Panc1 (cell line): ENCODE measurements at regions of chr19 and their contacts with region 1.

Region 1: GRCh38 chr19:40139533-40140287 is 49.0 kb upstream of the ZNF780A start:
- DNase-seq: peak; percentile 100
- ATAC-seq: peak; percentile 76
- H3K4me3 ChIP-seq: no peak overlapping the region
- H3K27ac ChIP-seq: no peak overlapping the region
- H3K4me1 ChIP-seq: no peaks in the 10 kb centered on the region
- H3K27me3 ChIP-seq: peaks cover 43% of the 10 kb centered on the region
- CTCF ChIP-seq: no peak

Region 2: GRCh38 chr19:38989066-38989605 is 1150.6 kb before region 1 on chr19:
- CTCF ChIA-PET with region 1: no interaction called
- POLR2A ChIA-PET with region 1: interaction called, 14 read pairs
- in situ Hi-C with region 1: no loop called
- intact Hi-C with region 1: no loop called
- DNase-seq: no peak
- ATAC-seq: peak; percentile 80
- H3K4me3 ChIP-seq: no peak overlapping the region
- H3K27ac ChIP-seq: peak overlapping the region; percentile 2
- H3K4me1 ChIP-seq: peaks cover 14% of the 10 kb centered on the region
- H3K27me3 ChIP-seq: no peaks in the 10 kb centered on the region
- CTCF ChIP-seq: no peak

Region 3: DNA sequence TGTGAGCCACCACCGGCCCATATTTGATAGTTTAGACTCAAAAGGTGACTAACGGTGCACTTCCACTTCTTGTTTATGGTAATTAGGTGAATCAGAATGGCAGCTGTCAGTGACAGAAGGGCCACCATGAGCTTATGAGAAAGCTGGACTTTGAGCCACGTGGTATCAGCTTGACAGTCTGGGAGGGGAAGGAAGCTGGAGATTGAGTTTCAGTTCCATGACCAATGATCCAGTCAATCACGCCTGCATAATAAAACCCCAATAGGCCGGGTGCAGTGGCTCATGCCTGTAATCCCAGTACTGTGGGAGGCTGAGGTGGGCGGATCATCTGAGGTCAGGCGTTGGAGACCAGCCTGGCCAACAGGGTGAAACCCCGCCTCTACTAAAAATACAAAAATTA is 615.2 kb before region 1 on chr19:
- CTCF ChIA-PET with region 1: interaction called, 15 read pairs
- POLR2A ChIA-PET with region 1: no interaction called
- in situ Hi-C with region 1: no loop called
- intact Hi-C with region 1: no loop called
- DNase-seq: no peak
- ATAC-seq: peak; percentile 1; the same call in 1 of the 2 replicates
- H3K4me3 ChIP-seq: no peak overlapping the region
- H3K27ac ChIP-seq: no peak overlapping the region
- H3K4me1 ChIP-seq: peaks cover 3% of the 10 kb centered on the region; the same call in 1 of the 2 replicates
- H3K27me3 ChIP-seq: no peaks in the 10 kb centered on the region
- CTCF ChIP-seq: no peak

Region 4: DNA sequence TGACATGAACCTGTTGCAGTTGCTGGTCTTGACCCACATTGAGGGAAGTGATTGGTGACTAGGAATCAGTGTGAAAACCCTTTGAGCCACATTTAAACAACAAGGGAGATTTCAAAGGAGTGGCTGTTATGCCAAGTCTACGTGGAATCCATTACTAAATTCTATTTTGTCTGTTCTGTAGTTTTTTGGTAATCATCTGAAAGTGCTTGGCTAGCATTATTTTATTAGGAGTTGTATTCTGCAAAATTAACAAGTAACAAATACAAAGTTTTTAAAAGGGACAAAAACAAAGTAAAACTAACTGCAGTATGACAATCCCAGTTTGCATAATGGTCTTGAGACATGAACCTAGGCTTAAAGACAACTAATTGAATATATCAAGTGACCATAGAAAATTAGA is 35.0 kb before region 1 on chr19:
- CTCF ChIA-PET with region 1: no interaction called
- POLR2A ChIA-PET with region 1: interaction called, 13 read pairs
- in situ Hi-C with region 1: no loop called
- intact Hi-C with region 1: no loop called
- DNase-seq: no peak
- ATAC-seq: peak; percentile 25; the same call in 1 of the 2 replicates
- H3K4me3 ChIP-seq: no peak overlapping the region
- H3K27ac ChIP-seq: no peak overlapping the region
- H3K4me1 ChIP-seq: no peaks in the 10 kb centered on the region
- H3K27me3 ChIP-seq: peaks cover 8% of the 10 kb centered on the region; the same call in 1 of the 2 replicates
- CTCF ChIP-seq: no peak

Region 5: GRCh38 chr19:40221858-40222837 is 82.4 kb after region 1 on chr19:
- CTCF ChIA-PET with region 1: interaction called, 153 read pairs
- POLR2A ChIA-PET with region 1: no interaction called
- in situ Hi-C with region 1: loop called (anchors 5 kb)
- intact Hi-C with region 1: loop called (anchors 1 kb)
- DNase-seq: peak; percentile 100
- ATAC-seq: peak; percentile 23
- H3K4me3 ChIP-seq: no peak overlapping the region
- H3K27ac ChIP-seq: no peak overlapping the region
- H3K4me1 ChIP-seq: peaks cover 39% of the 10 kb centered on the region
- H3K27me3 ChIP-seq: peaks cover 26% of the 10 kb centered on the region
- CTCF ChIP-seq: no peak

Region 6: DNA sequence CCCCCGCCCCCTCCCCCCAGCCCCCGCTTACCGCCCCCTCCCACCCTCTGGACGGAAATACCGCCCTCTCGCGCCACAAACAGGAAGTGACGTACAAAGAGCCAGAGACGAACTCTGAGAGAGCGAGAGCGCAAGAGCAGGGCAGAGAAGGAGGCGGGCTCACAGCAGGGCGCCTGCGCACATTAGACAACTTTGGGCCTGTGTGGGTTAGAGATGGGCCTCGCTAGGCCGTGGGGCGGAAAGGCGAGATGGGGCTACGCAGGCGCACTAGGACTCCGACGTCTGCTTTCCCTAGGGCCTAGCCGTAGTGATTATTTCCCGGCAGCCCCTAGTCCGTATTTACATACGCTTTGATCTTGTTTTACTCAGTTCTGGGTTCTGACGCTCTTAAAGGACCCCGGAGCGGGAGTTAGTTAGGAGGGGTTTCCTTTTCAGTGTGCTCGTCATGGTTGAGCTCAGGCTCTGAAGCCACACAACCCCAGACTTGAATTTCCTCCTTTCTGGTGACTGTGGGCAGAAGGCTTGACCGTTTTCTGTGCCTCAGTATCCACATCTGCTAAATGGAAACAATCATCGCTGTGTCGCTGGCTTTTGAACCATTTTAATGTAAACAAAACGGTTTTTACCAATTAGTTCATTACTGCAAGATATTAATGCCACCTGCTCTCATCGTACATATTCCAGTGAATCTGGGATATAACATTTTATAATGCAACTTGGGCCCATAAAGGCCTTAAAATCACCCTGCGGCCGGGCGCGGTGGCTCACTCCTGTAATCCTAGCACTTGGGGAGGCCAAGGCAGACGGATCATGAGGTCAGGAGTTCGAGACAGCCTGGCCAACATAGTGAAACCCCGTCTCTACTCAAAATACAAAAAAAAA is 145.9 kb after region 1 on chr19:
- CTCF ChIA-PET with region 1: interaction called, 12 read pairs
- POLR2A ChIA-PET with region 1: no interaction called
- in situ Hi-C with region 1: no loop called
- intact Hi-C with region 1: no loop called
- DNase-seq: peak; percentile 100
- ATAC-seq: peak; percentile 96
- H3K4me3 ChIP-seq: peak overlapping the region; percentile 36 to 47
- H3K27ac ChIP-seq: peak overlapping the region; percentile 89
- H3K4me1 ChIP-seq: peaks cover 51% of the 10 kb centered on the region
- H3K27me3 ChIP-seq: no peaks in the 10 kb centered on the region
- CTCF ChIP-seq: no peak